ENCODE measurements at regions of chr3 and their contacts with region 1.

Region 1: DNA sequence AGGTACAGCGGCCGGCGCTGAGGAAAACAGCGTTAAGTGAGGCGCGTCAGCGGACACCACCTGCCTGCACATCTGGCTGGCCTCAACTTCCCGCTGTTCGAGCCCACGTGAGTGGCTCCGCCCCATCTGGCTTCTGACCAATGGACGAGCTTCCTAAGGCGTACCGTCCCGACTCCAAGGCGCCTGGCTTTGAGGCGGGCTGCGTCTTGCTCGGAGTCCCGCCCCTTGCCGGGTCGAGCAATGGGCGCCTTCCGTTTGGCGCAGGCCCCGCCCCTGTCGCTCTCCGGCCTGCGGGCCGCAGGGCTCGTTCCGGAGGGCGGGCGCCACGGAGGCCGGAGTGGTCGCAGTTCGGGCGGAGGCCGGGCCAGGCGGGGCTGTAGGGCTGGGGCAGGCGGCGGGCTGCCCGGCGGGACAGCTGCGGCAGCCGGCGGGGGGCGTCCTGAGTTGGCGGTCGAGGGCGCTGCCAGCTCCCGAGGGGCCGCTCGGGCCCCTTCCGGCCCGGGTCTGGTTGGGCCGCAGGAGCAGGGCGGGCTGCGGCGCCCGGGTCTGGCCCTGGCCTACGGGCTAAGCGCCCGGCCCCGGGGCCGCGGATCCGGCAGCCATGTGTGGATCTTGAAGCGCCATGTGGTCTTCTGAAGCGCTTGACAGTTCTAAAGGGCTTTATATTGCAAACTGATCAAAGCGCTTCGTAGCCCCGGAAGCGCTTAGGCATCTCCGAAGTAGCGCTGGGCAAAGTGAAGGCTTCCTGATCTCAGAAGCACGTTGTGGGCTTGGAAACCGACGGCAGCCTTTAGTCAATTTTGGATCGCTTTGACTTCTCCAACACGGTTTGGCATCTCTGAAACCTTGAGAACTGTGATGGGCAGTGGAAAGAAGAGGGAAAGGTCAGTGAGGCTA is at the start of gene TATDN2:
- DNase-seq: peak; percentile 97
- ATAC-seq: peak; percentile 94
- H3K4me3 Mint-ChIP-seq: peak within 1 kb of the TSS; percentile 97
- H3K27ac Mint-ChIP-seq: peak within 1 kb of the TSS; percentile 96
- H3K4me1 Mint-ChIP-seq: peaks cover 63% of the 10 kb centered on the region
- H3K27me3 Mint-ChIP-seq: no peaks in the 10 kb centered on the region
- total RNA-seq, gene TATDN2: 40.0 to 40.2 TPM

Region 2: DNA sequence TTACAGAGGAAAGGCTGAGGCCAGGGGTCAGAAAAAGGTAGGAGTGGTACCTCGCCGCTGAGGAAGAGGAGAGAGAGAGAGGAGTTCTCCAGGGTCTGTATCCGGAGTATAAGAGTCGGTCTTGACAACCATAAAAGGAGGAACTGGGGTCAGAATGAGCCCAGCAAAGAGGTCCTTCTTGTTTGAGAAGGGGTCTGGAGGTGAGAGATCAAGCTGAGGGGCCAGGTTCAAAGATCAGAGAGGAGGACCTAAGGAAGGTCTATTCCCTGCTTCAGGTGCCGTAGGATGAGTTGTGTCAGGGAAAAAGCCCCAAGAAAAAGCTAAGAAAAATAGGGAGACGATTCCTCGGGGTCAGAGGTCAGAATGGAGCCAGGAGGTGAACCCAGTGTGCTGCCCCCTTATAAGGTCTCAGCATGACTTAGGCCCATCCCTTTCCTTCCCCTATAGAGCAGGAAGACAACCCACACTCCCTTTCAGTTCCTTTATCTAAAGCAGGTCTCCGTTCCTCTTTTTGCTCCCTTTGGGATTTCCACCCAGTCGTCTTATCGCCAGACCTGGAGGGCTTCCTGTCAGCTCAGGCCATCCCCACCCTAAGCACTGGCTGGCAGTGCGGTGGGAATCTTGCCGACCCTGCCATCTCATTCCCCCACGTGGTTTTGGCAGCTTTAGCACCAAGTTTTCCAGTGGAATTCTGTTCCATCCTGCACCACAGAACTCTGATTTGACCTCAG is 598.5 kb before region 1 on chr3:
- CTCF ChIA-PET with region 1: no interaction called
- POLR2A ChIA-PET with region 1: no interaction called
- intact Hi-C with region 1: loop called in 1 of 2 experiments (anchors 10 kb)
- DNase-seq: no peak
- ATAC-seq: peak; percentile 1
- H3K4me3 Mint-ChIP-seq: peak overlapping the region; percentile 95
- H3K27ac Mint-ChIP-seq: peak overlapping the region; percentile 92
- H3K4me1 Mint-ChIP-seq: peaks cover 24% of the 10 kb centered on the region
- H3K27me3 Mint-ChIP-seq: no peaks in the 10 kb centered on the region

Region 3: GRCh38 chr3:9986237-9986725 is 262.2 kb before region 1 on chr3:
- CTCF ChIA-PET with region 1: no interaction called
- POLR2A ChIA-PET with region 1: no interaction called
- intact Hi-C with region 1: loop called in 1 of 2 experiments (anchors 2 kb)
- DNase-seq: no peak
- ATAC-seq: peak; percentile 31
- H3K4me3 Mint-ChIP-seq: peak overlapping the region; percentile 94
- H3K27ac Mint-ChIP-seq: peak overlapping the region; percentile 98
- H3K4me1 Mint-ChIP-seq: peaks cover 32% of the 10 kb centered on the region
- H3K27me3 Mint-ChIP-seq: no peaks in the 10 kb centered on the region

Region 4: DNA sequence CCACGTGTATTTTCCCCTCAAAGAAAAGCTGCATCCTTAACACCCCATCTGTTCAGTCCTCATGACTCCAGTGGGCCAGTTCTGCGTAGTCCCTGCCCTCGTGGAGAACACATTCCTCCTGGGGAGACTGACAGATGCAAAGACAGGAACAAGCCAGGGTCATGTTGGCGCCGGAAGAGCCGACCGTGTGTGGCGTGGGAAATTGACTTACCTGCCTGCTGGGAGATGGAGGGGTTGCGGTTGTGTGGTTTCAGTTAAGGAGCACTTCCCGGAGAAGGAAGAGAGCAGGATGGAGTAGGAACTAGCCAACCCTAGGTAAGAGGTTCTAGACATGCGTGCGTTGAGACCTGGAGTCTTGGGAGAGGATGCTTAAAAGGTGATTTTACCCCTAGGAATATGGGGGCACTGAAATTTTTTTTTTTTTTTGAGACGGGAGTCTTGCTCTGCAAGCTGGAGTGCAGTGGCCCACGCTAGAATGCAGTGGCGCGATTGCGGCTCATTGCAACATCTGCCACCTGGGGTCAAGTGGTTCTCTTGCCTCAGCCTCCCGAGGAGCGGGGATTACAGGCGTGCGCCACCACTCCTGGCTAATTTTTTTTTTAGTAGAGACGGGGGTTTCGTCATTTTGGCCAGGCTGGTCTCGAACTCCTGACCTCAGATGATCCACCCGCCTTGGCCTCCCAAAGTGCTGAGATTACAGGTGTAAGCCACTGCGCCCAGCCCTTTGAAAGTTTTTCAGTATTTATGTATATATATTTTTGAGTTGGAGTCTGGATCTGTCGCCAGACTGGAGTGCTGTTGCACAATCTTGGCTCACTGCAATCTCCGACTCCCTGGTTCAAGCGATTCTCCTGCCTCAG is 105.5 kb before region 1 on chr3:
- CTCF ChIA-PET with region 1: no interaction called
- POLR2A ChIA-PET with region 1: interaction called, 5 read pairs
- intact Hi-C with region 1: loop called (anchors 1 to 5 kb)
- DNase-seq: peak; percentile 57
- ATAC-seq: peak; percentile 15
- H3K4me3 Mint-ChIP-seq: peak overlapping the region; percentile 97
- H3K27ac Mint-ChIP-seq: peak overlapping the region; percentile 89
- H3K4me1 Mint-ChIP-seq: peaks cover 28% of the 10 kb centered on the region
- H3K27me3 Mint-ChIP-seq: no peaks in the 10 kb centered on the region

Region 5: DNA sequence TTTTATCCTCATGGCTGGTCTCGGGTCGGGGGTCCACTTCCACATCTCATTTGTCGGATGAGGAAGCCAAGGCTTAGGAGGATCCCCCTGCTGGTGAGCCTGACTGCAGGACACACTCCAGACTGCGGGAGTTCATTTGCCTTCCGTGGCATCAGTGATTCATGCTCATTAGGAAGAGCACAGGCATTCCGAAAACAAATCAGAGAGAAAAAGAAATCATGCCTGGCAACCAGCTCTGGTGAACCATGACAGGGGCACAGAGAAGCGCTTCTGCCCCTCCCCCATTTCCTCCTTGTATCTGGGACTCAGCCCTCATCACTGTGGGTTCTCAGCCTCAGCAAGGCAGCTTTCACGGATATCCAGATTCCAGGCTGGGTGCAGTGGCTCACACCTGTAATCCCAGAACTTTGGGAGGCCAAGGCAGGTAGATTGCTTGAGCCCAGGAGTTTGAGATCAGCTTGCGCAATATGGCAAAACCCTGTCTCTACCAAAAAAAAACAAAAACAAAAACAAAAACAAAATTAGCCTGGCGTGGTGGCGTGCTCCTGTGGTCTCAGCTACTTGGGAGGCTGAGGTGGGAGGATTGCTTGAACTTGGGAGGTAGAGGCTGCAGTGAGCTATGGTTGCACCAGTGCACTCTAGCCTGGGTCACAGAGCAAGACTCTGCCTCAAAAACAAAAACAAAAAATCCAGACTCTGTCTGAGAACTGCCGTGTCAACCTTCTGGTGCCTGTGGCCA is 55.3 kb before region 1 on chr3:
- CTCF ChIA-PET with region 1: interaction called, 7 read pairs
- POLR2A ChIA-PET with region 1: interaction called, 7 read pairs
- intact Hi-C with region 1: loop called (anchors 1 to 2 kb)
- DNase-seq: peak; percentile 85
- ATAC-seq: peak; percentile 45
- H3K4me3 Mint-ChIP-seq: peak overlapping the region; percentile 41
- H3K27ac Mint-ChIP-seq: peak overlapping the region; percentile 97
- H3K4me1 Mint-ChIP-seq: peaks cover 85% of the 10 kb centered on the region
- H3K27me3 Mint-ChIP-seq: no peaks in the 10 kb centered on the region

Region 6: GRCh38 chr3:10263646-10264363 is 15.4 kb after region 1 on chr3:
- CTCF ChIA-PET with region 1: interaction called, 52 read pairs
- POLR2A ChIA-PET with region 1: interaction called, 6 read pairs
- intact Hi-C with region 1: loop called in 1 of 2 experiments (anchors 1 kb)
- DNase-seq: peak; percentile 86
- ATAC-seq: peak; percentile 94
- H3K4me3 Mint-ChIP-seq: peak overlapping the region; percentile 59
- H3K27ac Mint-ChIP-seq: peak overlapping the region; percentile 91
- H3K4me1 Mint-ChIP-seq: peaks cover 85% of the 10 kb centered on the region
- H3K27me3 Mint-ChIP-seq: no peaks in the 10 kb centered on the region

Region 7: DNA sequence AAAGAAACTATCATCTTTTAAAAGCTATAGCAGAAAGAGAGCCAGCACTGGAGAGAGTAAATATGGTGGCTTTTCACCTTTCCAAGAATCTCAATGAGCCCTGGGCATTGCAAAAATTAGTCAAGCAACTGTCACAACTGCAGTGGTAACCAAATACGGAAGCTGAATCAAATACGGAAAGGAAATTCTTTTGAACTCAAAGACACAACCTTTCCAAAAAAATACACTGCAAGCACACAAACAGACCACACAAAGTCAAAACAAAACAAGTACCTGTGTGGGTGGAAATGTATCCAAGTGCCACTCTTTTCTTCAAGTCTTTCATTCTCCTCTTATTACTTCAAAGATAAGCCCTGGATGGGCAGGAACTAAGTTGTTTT is 1377.6 kb after region 1 on chr3:
- CTCF ChIA-PET with region 1: no interaction called
- POLR2A ChIA-PET with region 1: no interaction called
- intact Hi-C with region 1: loop called in 1 of 2 experiments (anchors 10 kb)
- DNase-seq: peak; percentile 44
- ATAC-seq: peak; percentile 67
- H3K4me3 Mint-ChIP-seq: peak overlapping the region; percentile 26
- H3K27ac Mint-ChIP-seq: peak overlapping the region; percentile 66
- H3K4me1 Mint-ChIP-seq: peaks cover 67% of the 10 kb centered on the region
- H3K27me3 Mint-ChIP-seq: no peaks in the 10 kb centered on the region